IMR-90 (cell line): ENCODE measurements at regions of chr1 and their contacts with region 1.

Region 1: GRCh38 chr1:238672262-238672661 is 714.1 kb upstream of the CHRM3 start:
- DNase-seq: no peak
- ATAC-seq: no peak
- H3K4me3 ChIP-seq: no peak overlapping the region
- H3K27ac ChIP-seq: no peak overlapping the region
- H3K4me1 ChIP-seq: no peaks in the 10 kb centered on the region
- H3K27me3 ChIP-seq: no peaks in the 10 kb centered on the region
- CTCF ChIP-seq: no peak
- POLR2A ChIP-seq: no peak
- RAD21 ChIP-seq: no peak

Region 2: GRCh38 chr1:238752327-238752726 is 80.1 kb after region 1 on chr1:
- CTCF ChIA-PET with region 1: no interaction called
- POLR2A ChIA-PET with region 1: interaction called, 20 read pairs
- dilution Hi-C with region 1: no loop called
- in situ Hi-C with region 1: no loop called
- intact Hi-C with region 1: no loop called
- DNase-seq: no peak
- ATAC-seq: no peak
- H3K4me3 ChIP-seq: no peak overlapping the region
- H3K27ac ChIP-seq: no peak overlapping the region
- H3K4me1 ChIP-seq: no peaks in the 10 kb centered on the region
- H3K27me3 ChIP-seq: no peaks in the 10 kb centered on the region
- CTCF ChIP-seq: no peak
- POLR2A ChIP-seq: no peak
- RAD21 ChIP-seq: no peak